Activated naive CD4-positive, alpha-beta T cell treated with anti-CD3 and anti-CD28 coated beads for 36 hours (primary cell): ENCODE measurements at regions of chr4 and their contacts with region 1.

Region 1: DNA sequence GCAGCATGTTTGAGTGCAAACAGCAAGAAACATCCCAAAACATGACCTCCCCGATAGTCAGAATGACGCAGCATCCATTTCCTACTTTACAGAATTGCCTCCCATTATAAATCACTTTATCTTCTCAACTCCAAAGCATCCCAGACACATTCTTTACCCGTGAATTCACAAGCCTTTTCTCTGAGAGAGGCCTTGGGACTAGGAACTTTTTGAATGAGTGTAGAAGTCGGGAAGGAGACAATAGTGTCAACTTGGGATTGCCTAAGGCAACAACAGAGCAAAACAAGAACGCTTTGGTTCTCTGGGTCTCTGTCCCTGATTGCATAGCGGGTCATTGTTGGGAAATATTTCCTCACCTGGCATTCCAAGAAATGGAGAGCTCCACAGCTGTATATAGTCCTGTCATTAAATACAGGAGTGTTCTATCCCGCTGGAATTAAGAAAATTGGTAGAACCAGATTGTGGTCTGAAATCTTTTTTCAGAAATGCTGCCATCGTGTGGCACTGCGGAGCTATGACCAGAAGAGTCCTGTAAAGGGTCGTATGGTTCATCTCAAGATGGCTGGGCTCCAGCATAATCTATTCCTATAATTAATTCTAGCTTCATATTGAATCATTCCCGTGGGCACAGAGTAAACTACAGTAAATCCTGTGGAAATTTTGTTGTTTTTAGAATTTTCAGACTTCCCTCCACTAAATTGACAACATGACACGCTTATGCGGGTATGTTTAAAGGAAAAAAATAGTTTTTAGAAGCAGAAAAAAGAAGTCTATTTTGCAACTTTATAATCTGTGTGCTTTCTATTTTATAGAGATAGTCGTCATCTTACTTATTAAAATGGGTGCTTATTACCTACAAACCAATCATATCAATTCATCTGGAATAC is 2.0 kb upstream of the SPP1 start:
- DNase-seq: peak; percentile 58
- H3K4me3 Mint-ChIP-seq: no peak overlapping the region
- H3K27ac Mint-ChIP-seq: no peak overlapping the region
- H3K4me1 Mint-ChIP-seq: peaks cover 5% of the 10 kb centered on the region
- H3K27me3 Mint-ChIP-seq: peaks cover 33% of the 10 kb centered on the region

Region 2: DNA sequence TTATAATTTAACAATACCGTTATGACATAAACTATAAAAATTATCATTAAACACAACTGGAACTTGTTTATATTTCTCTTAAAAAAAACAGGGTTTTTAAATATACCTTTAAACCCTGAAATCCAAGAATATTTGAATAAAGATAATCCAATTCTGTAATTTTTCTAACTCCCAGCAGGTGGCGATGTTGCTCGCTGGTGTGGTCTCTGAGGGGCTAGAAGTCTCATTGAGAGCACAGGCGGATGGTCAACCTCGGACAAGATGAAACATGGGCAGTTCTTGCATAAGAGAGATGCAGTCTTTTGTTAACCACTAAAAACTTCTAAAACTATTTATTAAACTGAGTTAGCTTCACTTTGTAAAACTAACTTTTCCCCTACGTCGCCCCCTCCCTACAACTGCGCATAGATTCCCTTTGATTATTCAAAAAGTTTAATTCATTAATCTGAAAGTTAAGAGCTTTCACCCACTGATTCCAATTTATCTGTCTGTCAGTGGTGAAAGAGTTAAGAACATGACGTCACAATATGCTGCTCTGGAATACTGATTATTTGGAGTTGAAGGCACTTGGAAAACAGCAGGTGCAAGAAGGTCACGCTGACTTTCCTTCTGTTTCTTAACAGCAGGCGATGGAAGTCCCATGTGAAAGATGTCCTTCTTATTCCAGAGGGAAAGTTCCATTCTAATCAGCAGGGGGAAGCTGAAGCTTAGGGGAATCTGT is 293.9 kb before region 1 on chr4:
- CTCF ChIA-PET with region 1: interaction called, 3 read pairs
- intact Hi-C with region 1: loop called (anchors 1 kb)
- DNase-seq: peak; percentile 37
- H3K4me3 Mint-ChIP-seq: no peak overlapping the region
- H3K27ac Mint-ChIP-seq: no peak overlapping the region
- H3K4me1 Mint-ChIP-seq: no peaks in the 10 kb centered on the region
- H3K27me3 Mint-ChIP-seq: peaks cover 1% of the 10 kb centered on the region

Region 3: DNA sequence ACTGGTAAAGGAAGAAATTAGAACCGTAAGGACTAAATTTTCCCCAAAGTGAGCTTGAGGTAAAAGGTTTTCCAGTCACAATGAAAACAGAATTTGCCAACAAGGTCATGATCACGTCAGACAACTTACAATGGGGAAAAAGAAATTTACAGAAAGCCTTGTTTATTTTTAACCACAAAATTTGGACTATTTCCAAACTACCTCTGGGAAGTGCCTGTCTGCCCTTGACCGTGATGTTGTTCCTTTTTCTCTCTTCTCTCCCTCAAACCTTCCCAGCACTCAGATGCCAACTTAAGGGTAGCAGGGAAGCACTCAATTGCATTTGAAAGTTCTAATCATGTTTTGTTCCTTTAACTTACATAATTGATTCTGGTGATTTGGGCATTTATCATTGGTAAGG is 108.2 kb before region 1 on chr4:
- CTCF ChIA-PET with region 1: interaction called, 14 read pairs
- intact Hi-C with region 1: no loop called
- DNase-seq: no peak
- H3K4me3 Mint-ChIP-seq: no peak overlapping the region
- H3K27ac Mint-ChIP-seq: no peak overlapping the region
- H3K4me1 Mint-ChIP-seq: no peaks in the 10 kb centered on the region
- H3K27me3 Mint-ChIP-seq: peaks cover 13% of the 10 kb centered on the region

Region 4: GRCh38 chr4:87961993-87962392 is 11.5 kb before region 1 on chr4:
- CTCF ChIA-PET with region 1: interaction called, 23 read pairs
- intact Hi-C with region 1: no loop called
- DNase-seq: no peak
- H3K4me3 Mint-ChIP-seq: no peak overlapping the region
- H3K27ac Mint-ChIP-seq: no peak overlapping the region
- H3K4me1 Mint-ChIP-seq: no peaks in the 10 kb centered on the region
- H3K27me3 Mint-ChIP-seq: no peaks in the 10 kb centered on the region

Region 5: DNA sequence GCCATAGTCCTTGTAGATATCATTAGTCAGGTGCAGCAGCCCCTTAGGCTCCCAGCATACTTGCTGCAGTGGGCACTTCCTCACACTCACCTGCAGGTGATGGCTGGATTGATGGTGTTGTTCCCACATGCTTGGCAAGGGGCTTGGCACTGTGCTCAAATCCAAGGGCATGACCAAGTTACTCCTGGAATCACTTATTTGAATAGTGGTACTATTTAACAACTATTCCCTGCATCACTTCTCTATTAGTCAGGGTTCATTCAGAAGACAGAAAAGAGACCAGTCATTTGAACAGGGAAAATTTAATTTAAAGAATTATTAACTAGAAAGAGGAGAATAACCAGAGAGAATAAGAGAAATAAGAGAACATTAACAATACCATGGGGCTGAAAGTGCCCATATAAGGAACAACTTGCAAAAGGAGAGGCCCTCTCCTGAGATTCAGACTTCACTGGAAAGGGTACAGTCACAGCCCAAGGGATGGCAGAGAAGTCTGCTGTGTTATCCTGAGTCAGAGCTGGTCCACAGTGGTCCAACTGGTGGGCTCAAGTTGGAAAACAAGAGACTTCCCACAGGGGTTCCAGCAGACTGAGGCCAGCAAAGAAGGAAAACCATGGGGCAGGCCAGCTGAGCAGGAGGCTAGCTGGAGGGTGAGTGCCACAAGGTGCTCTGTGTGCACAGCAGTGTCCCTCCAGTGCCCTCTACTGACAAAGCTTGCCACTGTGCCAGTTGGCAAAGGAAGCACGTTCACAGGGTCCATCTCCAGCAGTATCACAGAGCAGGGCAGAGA is 11.8 kb after region 1 on chr4:
- CTCF ChIA-PET with region 1: interaction called, 10 read pairs
- intact Hi-C with region 1: no loop called
- DNase-seq: peak; percentile 63
- H3K4me3 Mint-ChIP-seq: no peak overlapping the region
- H3K27ac Mint-ChIP-seq: no peak overlapping the region
- H3K4me1 Mint-ChIP-seq: no peaks in the 10 kb centered on the region
- H3K27me3 Mint-ChIP-seq: peaks cover 9% of the 10 kb centered on the region